CD8-positive, alpha-beta memory T cell (primary cell): ENCODE measurements at regions of chr7 and their contacts with region 1.

Region 1: GRCh38 chr7:29408841-29409243 is 154.8 kb upstream of the PRR15 start:
- DNase-seq: peak; percentile 25 to 59 (median 48)
- H3K4me3 ChIP-seq: no peak overlapping the region
- H3K4me3 Mint-ChIP-seq: no peak overlapping the region
- H3K27ac ChIP-seq: no peak overlapping the region
- H3K27ac Mint-ChIP-seq: no peak overlapping the region
- H3K4me1 ChIP-seq: no peaks in the 10 kb centered on the region
- H3K4me1 Mint-ChIP-seq: peaks cover 0 to 3% (median 3%) of the 10 kb centered on the region in 3 donors
- H3K27me3 ChIP-seq: no peaks in the 10 kb centered on the region
- H3K27me3 Mint-ChIP-seq: peaks cover 0 to 3% of the 10 kb centered on the region in 2 donors

Region 2: DNA sequence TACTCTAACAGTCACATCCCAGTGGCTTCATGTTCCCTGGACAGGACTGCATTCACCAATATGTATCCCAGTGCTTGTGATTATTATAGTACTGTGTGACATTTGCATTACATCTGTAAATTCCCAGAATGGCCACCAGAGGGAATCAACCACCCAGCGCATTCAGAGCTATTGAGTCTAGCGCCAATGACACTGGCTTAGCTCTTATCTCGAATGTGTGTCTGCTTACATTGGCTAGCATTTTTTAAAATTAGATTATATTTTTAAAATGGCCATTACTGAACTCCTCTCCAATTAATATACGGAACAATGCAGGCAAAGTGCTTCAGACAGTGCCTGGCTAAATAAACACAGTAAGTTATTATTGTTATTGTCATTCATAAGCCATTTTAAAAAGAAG is 487.0 kb before region 1 on chr7:
- CTCF ChIA-PET with region 1: interaction called, 106 read pairs
- POLR2A ChIA-PET with region 1: no interaction called
- DNase-seq: peak in 4 of 5 donors; percentile 10 to 50 (median 29)
- H3K4me3 ChIP-seq: no peak overlapping the region
- H3K4me3 Mint-ChIP-seq: no peak overlapping the region
- H3K27ac ChIP-seq: no peak overlapping the region
- H3K27ac Mint-ChIP-seq: peak overlapping the region in 1 of 8 donors; percentile 30
- H3K4me1 ChIP-seq: peaks cover 10% of the 10 kb centered on the region
- H3K4me1 Mint-ChIP-seq: peaks cover 20 to 23% (median 20%) of the 10 kb centered on the region in 3 donors
- H3K27me3 ChIP-seq: no peaks in the 10 kb centered on the region
- H3K27me3 Mint-ChIP-seq: peaks cover 0 to under 1% of the 10 kb centered on the region in 2 donors

Region 3: GRCh38 chr7:28926871-28927597 is 481.8 kb before region 1 on chr7:
- CTCF ChIA-PET with region 1: interaction called, 106 read pairs
- POLR2A ChIA-PET with region 1: no interaction called
- DNase-seq: peak; percentile 10 to 59 (median 58)
- H3K4me3 ChIP-seq: peak overlapping the region; percentile 75
- H3K4me3 Mint-ChIP-seq: peak overlapping the region; percentile 83 to 96 (median 93)
- H3K27ac ChIP-seq: no peak overlapping the region
- H3K27ac Mint-ChIP-seq: peak overlapping the region in 5 of 8 donors; percentile 27 to 90 (median 85)
- H3K4me1 ChIP-seq: peaks cover 14% of the 10 kb centered on the region
- H3K4me1 Mint-ChIP-seq: peaks cover 22 to 30% (median 25%) of the 10 kb centered on the region in 3 donors
- H3K27me3 ChIP-seq: no peaks in the 10 kb centered on the region
- H3K27me3 Mint-ChIP-seq: peaks cover 3 to 9% of the 10 kb centered on the region in 2 donors

Region 4: DNA sequence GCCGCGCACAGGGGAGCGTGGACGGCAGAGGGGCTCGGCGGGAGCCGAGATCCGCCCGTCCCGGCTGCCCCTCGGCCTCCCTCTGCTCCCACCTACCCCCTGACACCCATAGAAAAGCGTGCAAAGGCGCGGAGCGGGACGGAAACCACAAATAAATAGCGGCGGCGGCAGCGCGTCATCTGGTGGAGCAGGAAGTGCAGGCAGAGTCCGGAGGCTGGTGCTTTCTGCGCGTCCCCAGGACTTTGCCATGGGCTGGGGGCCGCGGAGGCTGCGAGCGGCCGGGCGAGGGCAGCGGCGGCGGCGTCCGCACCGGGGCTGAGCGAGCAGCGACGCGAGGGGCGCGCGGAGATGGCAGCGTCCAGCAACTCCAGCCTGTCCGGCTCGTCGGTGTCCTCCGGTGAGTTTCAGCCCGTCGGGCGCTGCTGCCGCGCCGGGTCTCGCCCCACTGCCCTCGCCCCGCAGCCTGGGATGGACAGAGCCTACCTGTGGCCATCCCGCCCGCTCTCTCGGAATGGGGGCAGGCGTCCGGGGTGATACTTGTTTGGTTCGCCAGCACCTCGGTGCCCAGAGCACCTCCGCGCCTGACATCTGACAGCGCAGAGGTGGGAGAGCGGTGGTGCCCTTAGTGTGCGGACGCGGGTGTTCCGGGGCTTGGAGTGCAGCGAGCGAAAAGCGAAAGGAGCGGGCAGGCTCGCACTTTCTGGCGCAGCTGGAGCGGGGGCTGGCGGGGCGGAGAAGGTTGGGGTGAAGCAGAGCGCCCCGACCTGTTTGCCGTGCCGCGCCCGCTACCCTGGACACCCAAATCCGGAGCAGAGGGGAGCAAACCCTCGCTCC is 214.0 kb before region 1 on chr7 and contains the start of gene CHN2:
- CTCF ChIA-PET with region 1: interaction called, 147 read pairs
- POLR2A ChIA-PET with region 1: no interaction called
- DNase-seq: peak; percentile 15 to 82 (median 57)
- H3K4me3 ChIP-seq: peak within 1 kb of the TSS; percentile 67
- H3K4me3 Mint-ChIP-seq: peak within 1 kb of the TSS; percentile 93 to 99 (median 95)
- H3K27ac ChIP-seq: peak within 1 kb of the TSS; percentile 54
- H3K27ac Mint-ChIP-seq: peak within 1 kb of the TSS; percentile 81 to 96 (median 92)
- H3K4me1 ChIP-seq: peaks cover 17% of the 10 kb centered on the region
- H3K4me1 Mint-ChIP-seq: peaks cover 36 to 66% (median 41%) of the 10 kb centered on the region in 3 donors
- H3K27me3 ChIP-seq: no peaks in the 10 kb centered on the region
- H3K27me3 Mint-ChIP-seq: peaks cover 0 to 4% of the 10 kb centered on the region in 2 donors
- total RNA-seq, gene CHN2: 4.1 to 5.3 TPM

Region 5: DNA sequence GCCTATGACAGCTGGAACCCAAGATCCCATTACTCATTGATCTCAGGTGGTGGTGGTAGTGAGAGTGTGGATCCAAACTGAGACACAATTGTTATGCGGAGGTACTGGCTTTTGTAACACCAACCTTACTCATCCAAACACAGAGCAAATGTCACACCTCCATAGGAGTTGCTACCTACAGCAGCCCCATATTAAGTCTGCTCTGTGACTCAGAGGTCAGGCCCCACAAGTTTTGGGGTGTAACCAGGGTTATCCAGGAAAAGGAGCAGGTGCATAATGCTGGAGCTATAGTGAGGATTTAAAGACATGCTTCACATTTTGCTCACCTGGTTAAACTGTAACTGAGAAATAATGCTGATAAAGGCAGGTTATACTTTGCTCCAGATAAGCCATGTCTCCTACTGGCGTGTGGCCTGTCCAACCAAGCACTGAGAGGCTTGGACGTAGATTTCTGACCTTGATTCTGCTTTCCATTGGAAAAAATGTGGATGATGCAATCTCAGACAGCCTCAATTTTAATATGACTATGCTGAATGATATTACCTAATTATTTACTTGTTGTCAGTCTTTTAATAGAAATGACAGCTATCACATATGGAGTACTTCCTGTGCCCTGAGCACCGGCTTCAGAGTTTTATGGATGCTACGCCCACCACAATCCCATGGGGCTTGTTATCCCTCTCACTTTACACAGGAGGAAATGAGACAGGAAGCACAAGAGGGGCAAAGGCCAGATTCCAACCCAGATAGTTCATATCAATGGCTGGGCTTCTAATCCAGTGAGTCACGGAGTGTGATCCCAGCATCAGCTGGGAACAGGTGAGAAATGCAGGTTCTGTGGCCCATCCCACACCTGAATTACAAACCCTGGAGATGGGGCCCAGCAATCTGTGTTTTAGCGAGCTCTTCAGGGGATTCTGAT is 32.9 kb before region 1 on chr7:
- CTCF ChIA-PET with region 1: no interaction called
- POLR2A ChIA-PET with region 1: no interaction called
- DNase-seq: no peak
- H3K4me3 ChIP-seq: no peak overlapping the region
- H3K4me3 Mint-ChIP-seq: peak overlapping the region in 1 of 7 donors; percentile 55
- H3K27ac ChIP-seq: no peak overlapping the region
- H3K27ac Mint-ChIP-seq: no peak overlapping the region
- H3K4me1 ChIP-seq: no peaks in the 10 kb centered on the region
- H3K4me1 Mint-ChIP-seq: peaks cover 0 to 2% (median 0%) of the 10 kb centered on the region in 3 donors
- H3K27me3 ChIP-seq: no peaks in the 10 kb centered on the region
- H3K27me3 Mint-ChIP-seq: no peaks in the 10 kb centered on the region

Region 6: DNA sequence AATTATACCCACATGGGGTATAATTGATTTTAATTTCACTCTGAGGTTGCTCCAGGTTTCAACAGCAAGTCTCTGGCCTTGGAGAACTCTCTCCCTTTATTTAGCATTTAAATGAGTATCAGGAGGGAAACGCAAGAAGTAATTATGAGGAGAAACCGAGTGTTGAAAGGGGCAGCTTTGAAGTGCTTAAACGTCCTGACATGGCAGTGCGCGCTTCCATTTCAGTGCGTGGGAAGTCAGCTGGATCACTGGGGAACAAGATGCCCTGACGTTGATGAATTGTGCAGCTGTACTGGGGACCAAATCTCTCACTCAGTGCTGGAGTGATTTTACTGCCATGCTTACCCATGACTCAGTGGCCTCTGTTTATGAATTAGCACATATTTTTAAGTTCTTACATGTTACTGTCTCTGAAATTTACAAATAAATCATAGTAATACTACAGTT is 48.7 kb after region 1 on chr7:
- CTCF ChIA-PET with region 1: no interaction called
- POLR2A ChIA-PET with region 1: no interaction called
- DNase-seq: no peak
- H3K4me3 ChIP-seq: no peak overlapping the region
- H3K4me3 Mint-ChIP-seq: no peak overlapping the region
- H3K27ac ChIP-seq: no peak overlapping the region
- H3K27ac Mint-ChIP-seq: peak overlapping the region in 1 of 8 donors; percentile 12
- H3K4me1 ChIP-seq: no peaks in the 10 kb centered on the region
- H3K4me1 Mint-ChIP-seq: no peaks in the 10 kb centered on the region
- H3K27me3 ChIP-seq: no peaks in the 10 kb centered on the region
- H3K27me3 Mint-ChIP-seq: no peaks in the 10 kb centered on the region